CD14-positive monocyte (primary cell): ENCODE measurements at regions of chr2 and their contacts with region 1.

Region 1: GRCh38 chr2:69914170-69914960 is 544 bp upstream of the MXD1 start:
- DNase-seq: peak; percentile 100
- H3K4me3 ChIP-seq: peak overlapping the region; percentile 17 to 98 (median 68)
- H3K4me3 Mint-ChIP-seq: peak overlapping the region; percentile 86
- H3K27ac ChIP-seq: peak overlapping the region; percentile 92 to 97
- H3K27ac Mint-ChIP-seq: peak overlapping the region; percentile 91 to 96 (median 95)
- H3K4me1 ChIP-seq: peaks cover 37 to 49% of the 10 kb centered on the region in 2 donors
- H3K4me1 Mint-ChIP-seq: peaks cover 29% of the 10 kb centered on the region
- H3K27me3 ChIP-seq: no peaks in the 10 kb centered on the region
- H3K27me3 Mint-ChIP-seq: no peaks in the 10 kb centered on the region
- CTCF ChIP-seq: no peak

Region 2: GRCh38 chr2:69933839-69934613 is 19.7 kb after region 1 on chr2:
- intact Hi-C with region 1: loop called in 1 of 2 experiments (anchors 2 kb)
- DNase-seq: peak; percentile 85 to 95 (median 90)
- H3K4me3 ChIP-seq: peak overlapping the region in 2 of 3 experiments; percentile 12 to 64
- H3K4me3 Mint-ChIP-seq: peak overlapping the region; percentile 1 to 81
- H3K27ac ChIP-seq: peak overlapping the region; percentile 44 to 94
- H3K27ac Mint-ChIP-seq: peak overlapping the region; percentile 77 to 94 (median 91)
- H3K4me1 ChIP-seq: peaks cover 57 to 78% of the 10 kb centered on the region in 2 donors
- H3K4me1 Mint-ChIP-seq: peaks cover 71% of the 10 kb centered on the region
- H3K27me3 ChIP-seq: no peaks in the 10 kb centered on the region
- H3K27me3 Mint-ChIP-seq: no peaks in the 10 kb centered on the region
- CTCF ChIP-seq: no peak

Region 3: GRCh38 chr2:69985688-69986087 is 71.3 kb after region 1 on chr2:
- intact Hi-C with region 1: loop called in 1 of 2 experiments (anchors 5 kb)
- DNase-seq: peak; percentile 97 to 100 (median 97)
- H3K4me3 ChIP-seq: peak overlapping the region in 1 of 3 experiments; percentile 33
- H3K4me3 Mint-ChIP-seq: peak overlapping the region; percentile 20 to 47
- H3K27ac ChIP-seq: peak overlapping the region; percentile 58 to 90
- H3K27ac Mint-ChIP-seq: peak overlapping the region; percentile 93 to 96 (median 95)
- H3K4me1 ChIP-seq: peaks cover 31 to 35% of the 10 kb centered on the region in 2 donors
- H3K4me1 Mint-ChIP-seq: peaks cover 37% of the 10 kb centered on the region
- H3K27me3 ChIP-seq: no peaks in the 10 kb centered on the region
- H3K27me3 Mint-ChIP-seq: peaks cover 0 to 2% (median 0%) of the 10 kb centered on the region in 3 donors
- CTCF ChIP-seq: peak; percentile 42

Region 4: DNA sequence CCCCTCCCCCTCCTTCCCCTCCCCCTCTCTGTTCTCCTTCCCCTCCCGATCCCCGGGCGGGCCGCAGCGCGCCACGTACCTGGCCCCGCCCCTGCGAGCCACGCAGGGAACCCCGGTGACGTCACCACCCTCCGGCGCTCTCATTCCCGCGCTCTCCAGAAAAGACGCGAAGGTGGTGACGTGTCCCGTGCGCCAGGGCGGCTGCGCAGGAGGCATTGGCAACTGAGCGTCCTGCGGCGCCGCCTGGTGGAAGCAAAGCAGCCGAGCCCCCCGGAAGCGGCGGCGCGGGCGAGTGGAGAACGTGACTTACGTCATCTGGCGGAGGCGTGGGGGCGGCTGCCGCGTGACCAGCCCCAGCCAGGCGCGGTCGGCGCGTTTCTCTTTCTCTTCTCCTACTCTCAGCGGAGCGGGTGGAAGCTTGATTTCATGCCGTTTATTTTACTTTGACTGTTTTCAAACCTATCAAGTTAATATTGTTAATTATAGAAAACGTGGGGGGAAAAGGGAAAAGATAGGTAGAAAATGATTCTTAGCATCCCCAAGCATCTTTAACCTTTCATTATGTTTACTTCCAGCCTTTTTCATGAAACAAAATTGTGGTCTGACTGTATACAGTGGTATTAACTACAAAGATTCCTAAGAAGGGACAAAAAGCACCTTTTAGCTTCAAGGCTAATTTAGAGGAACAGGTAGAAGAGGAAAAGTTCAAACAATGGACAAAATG is 228.4 kb after region 1 on chr2:
- intact Hi-C with region 1: loop called (anchors 1 to 2 kb)
- DNase-seq: peak; percentile 98 to 100 (median 100)
- H3K4me3 ChIP-seq: peak overlapping the region; percentile 45 to 79 (median 46)
- H3K4me3 Mint-ChIP-seq: peak overlapping the region; percentile 77 to 89
- H3K27ac ChIP-seq: peak overlapping the region; percentile 80 to 98
- H3K27ac Mint-ChIP-seq: peak overlapping the region; percentile 94 to 100 (median 99)
- H3K4me1 ChIP-seq: peaks cover 32 to 42% of the 10 kb centered on the region in 2 donors
- H3K4me1 Mint-ChIP-seq: peaks cover 33% of the 10 kb centered on the region
- H3K27me3 ChIP-seq: no peaks in the 10 kb centered on the region
- H3K27me3 Mint-ChIP-seq: peaks cover 0 to 5% (median 1%) of the 10 kb centered on the region in 3 donors
- CTCF ChIP-seq: peak; percentile 87

Region 5: DNA sequence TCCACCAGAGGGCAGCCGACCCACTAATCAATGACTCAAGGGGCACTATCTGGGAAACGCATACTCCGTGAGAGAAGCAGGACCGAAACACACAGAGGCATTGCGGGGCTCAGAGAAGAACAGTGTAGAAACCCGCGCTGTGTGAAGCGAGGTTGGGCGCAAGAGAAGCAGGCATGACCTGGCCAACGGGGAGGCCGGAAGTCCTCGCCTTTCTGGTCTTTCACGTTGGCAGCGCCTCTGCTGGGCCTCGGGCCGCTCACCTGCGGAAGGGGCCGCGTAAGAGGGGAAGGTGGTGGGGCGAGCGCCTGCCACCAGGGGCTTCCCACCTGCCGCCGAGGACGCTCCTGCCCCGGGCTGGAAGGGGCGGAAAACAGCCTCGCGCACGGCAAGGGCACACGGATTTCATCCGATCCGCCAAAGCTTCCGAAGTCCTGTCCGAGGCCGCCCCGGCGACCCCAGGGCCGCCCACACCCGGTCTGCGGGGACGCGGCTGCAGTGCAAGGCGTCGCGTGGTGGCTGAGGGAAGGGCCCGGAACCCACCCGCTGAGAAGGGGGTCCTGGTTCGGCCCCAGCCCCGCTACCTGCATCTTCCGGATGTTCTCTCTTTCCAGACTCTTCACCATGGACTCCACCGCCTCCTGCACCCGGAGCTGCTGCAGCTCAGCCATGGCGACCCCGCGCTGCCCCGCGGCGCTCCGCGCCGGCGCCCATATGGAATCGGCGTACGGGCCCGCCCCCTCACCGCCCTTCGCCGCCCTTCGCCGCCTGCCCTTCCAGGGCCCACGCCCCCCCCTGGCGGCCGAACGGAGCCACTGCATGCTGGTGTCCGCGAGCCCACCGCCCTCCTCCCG is 387.2 kb after region 1 on chr2 and contains the start of gene FAM136A:
- intact Hi-C with region 1: loop called (anchors 5 kb)
- DNase-seq: peak; percentile 73 to 78 (median 74)
- H3K4me3 ChIP-seq: peak within 1 kb of the TSS; percentile 66 to 93 (median 89)
- H3K4me3 Mint-ChIP-seq: peak within 1 kb of the TSS; percentile 93 to 96
- H3K27ac ChIP-seq: peak within 1 kb of the TSS; percentile 52 to 78
- H3K27ac Mint-ChIP-seq: peak within 1 kb of the TSS in 6 of 7 donors; percentile 68 to 91 (median 88)
- H3K4me1 ChIP-seq: peaks cover 6 to 8% of the 10 kb centered on the region in 2 donors
- H3K4me1 Mint-ChIP-seq: peaks cover 13% of the 10 kb centered on the region
- H3K27me3 ChIP-seq: no peaks in the 10 kb centered on the region
- H3K27me3 Mint-ChIP-seq: peaks cover 0 to 6% (median 1%) of the 10 kb centered on the region in 3 donors
- CTCF ChIP-seq: peak; percentile 94
- polyA plus RNA-seq, gene FAM136A: 26.1 to 31.8 (median 30.1) TPM